H1 (cell line): ENCODE measurements at regions of chr9 and their contacts with region 1.

Region 1: GRCh38 chr9:129696938-129697650 is 31.6 kb downstream of the PRRX2 start:
- DNase-seq: peak in 1 of 2 experiments; percentile 80
- H3K4me3 ChIP-seq: peak overlapping the region; percentile 53 to 80 (median 60)
- H3K27ac ChIP-seq: no peak overlapping the region
- H3K4me1 ChIP-seq: peaks cover 0 to 9% (median 7%) of the 10 kb centered on the region in 4 experiments; a peak in 5 of 7 replicates
- H3K27me3 ChIP-seq: peaks cover 0 to 18% (median 9%) of the 10 kb centered on the region in 4 experiments; a peak in 3 of 7 replicates
- CTCF ChIP-seq: no peak
- EP300 ChIP-seq: no peak
- POLR2A ChIP-seq: peak in 1 of 2 experiments; percentile 67; a peak in 2 of 3 replicates
- RAD21 ChIP-seq: no peak

Region 2: GRCh38 chr9:129641746-129642513 is 55.2 kb before region 1 on chr9 and contains the start of gene ASB6:
- CTCF ChIA-PET with region 1: interaction called, 16 read pairs
- POLR2A ChIA-PET with region 1: interaction called, 3 read pairs
- DNase-seq: peak; percentile 83 to 100
- H3K4me3 ChIP-seq: peak within 1 kb of the TSS; percentile 66 to 98 (median 84)
- H3K27ac ChIP-seq: no peak within 1 kb of the TSS
- H3K4me1 ChIP-seq: peaks cover 0 to 10% (median 6%) of the 10 kb centered on the region in 4 experiments; a peak in 4 of 7 replicates
- H3K27me3 ChIP-seq: no peaks in the 10 kb centered on the region
- CTCF ChIP-seq: peak in 1 of 3 experiments; percentile 97; a peak in 3 of 4 replicates
- EP300 ChIP-seq: peak in 1 of 2 experiments; percentile 73; a peak in 1 of 3 replicates
- POLR2A ChIP-seq: peak in 1 of 2 experiments; percentile 62; a peak in 1 of 3 replicates
- RAD21 ChIP-seq: peak; percentile 92 to 93
- total RNA-seq, gene ASB6: 17.3 TPM in 2 replicates

Region 3: GRCh38 chr9:129685220-129685932 is 11.7 kb before region 1 on chr9:
- CTCF ChIA-PET with region 1: interaction called, 17 read pairs
- POLR2A ChIA-PET with region 1: interaction called, 3 read pairs
- DNase-seq: no peak
- H3K4me3 ChIP-seq: no peak overlapping the region
- H3K27ac ChIP-seq: no peak overlapping the region
- H3K4me1 ChIP-seq: no peaks in the 10 kb centered on the region; a peak in 1 of 7 replicates
- H3K27me3 ChIP-seq: no peaks in the 10 kb centered on the region
- CTCF ChIP-seq: no peak
- EP300 ChIP-seq: no peak
- POLR2A ChIP-seq: no peak
- RAD21 ChIP-seq: no peak